Testis (tissue), 5 donors: ENCODE measurements at regions of chr11 and their contacts with region 1.

Region 1: GRCh38 chr11:7690648-7691047 is 15.6 kb downstream of the OVCH2 start:
- DNase-seq: no peak
- H3K4me3 ChIP-seq: no peak overlapping the region
- H3K27ac ChIP-seq: no peak overlapping the region
- H3K4me1 ChIP-seq: peaks cover 8% of the 10 kb centered on the region
- H3K27me3 ChIP-seq: no peaks in the 10 kb centered on the region
- CTCF ChIP-seq: no peak
- POLR2A ChIP-seq: no peak

Region 2: GRCh38 chr11:7098235-7098832 is 592.3 kb before region 1 on chr11:
- intact Hi-C with region 1: loop called (anchors 10 kb)
- DNase-seq: no peak
- H3K4me3 ChIP-seq: no peak overlapping the region
- H3K27ac ChIP-seq: no peak overlapping the region
- H3K4me1 ChIP-seq: no peaks in the 10 kb centered on the region
- H3K27me3 ChIP-seq: no peaks in the 10 kb centered on the region
- CTCF ChIP-seq: peak in 2 of 3 experiments; percentile 51 to 56
- POLR2A ChIP-seq: no peak

Region 3: DNA sequence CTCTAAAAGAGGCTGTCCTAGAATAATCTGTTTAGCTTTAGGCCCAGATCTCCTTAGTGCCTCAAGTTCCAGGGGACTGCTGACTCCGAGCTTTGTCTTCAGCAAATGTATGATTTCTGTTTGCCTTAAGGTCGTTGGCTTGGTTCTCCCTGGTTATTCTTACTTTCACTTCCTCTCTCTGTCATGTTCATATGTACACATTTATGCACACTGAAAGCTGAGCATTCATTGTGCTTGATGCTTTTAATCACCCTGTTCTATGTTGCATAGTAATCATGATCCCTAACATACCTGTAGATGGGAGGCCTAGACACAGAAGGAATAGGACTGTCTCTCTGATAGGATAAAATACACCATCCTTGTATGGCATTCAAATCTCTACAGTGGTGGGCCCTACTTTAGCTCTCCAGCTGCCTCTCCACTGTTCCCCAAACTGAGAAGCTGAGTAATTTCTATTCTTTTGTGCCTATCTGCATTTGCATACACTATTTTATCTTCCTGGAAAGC is 169.6 kb before region 1 on chr11:
- intact Hi-C with region 1: no loop called
- DNase-seq: no peak
- H3K4me3 ChIP-seq: no peak overlapping the region
- H3K27ac ChIP-seq: no peak overlapping the region
- H3K4me1 ChIP-seq: peaks cover 6% of the 10 kb centered on the region
- H3K27me3 ChIP-seq: no peaks in the 10 kb centered on the region
- CTCF ChIP-seq: no peak
- POLR2A ChIP-seq: no peak